HEK293 (cell line): ENCODE measurements at regions of chr12 and their contacts with region 1.

Region 1: GRCh38 chr12:30847259-30847658 is 79.3 kb upstream of the TSPAN11 start:
- H3K4me3 ChIP-seq: no peak overlapping the region
- H3K27ac ChIP-seq: no peak overlapping the region
- H3K4me1 ChIP-seq: no peaks in the 10 kb centered on the region
- CTCF ChIP-seq: peak; percentile 57

Region 2: GRCh38 chr12:30813525-30814294 is 33.5 kb before region 1 on chr12:
- CTCF ChIA-PET with region 1: no interaction called
- POLR2A ChIA-PET with region 1: no interaction called
- H3K4me3 ChIP-seq: no peak overlapping the region
- H3K27ac ChIP-seq: no peak overlapping the region
- H3K4me1 ChIP-seq: no peaks in the 10 kb centered on the region
- CTCF ChIP-seq: no peak

Region 3: DNA sequence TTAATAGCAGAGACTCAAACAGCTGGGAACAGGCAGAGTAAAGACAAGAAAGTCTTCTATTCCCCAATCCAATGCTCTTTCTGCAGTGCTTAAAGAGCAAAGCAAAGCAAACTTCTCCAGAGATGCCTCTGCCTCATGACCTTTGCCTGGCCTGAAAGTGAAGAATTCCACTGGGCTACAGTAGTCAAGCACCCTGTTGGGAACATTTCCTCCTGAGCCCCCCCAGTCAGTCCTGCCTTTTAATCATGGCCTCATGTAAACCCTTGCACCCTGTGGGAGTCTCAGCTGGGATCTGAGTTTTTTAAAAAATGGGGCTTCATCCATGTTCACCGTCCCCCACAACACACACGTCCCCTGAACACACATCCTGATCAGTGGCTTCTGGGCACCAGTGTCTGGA is 16.6 kb after region 1 on chr12:
- CTCF ChIA-PET with region 1: interaction called, 12 read pairs
- POLR2A ChIA-PET with region 1: no interaction called
- H3K4me3 ChIP-seq: no peak overlapping the region
- H3K27ac ChIP-seq: no peak overlapping the region
- H3K4me1 ChIP-seq: no peaks in the 10 kb centered on the region
- CTCF ChIP-seq: no peak

Region 4: DNA sequence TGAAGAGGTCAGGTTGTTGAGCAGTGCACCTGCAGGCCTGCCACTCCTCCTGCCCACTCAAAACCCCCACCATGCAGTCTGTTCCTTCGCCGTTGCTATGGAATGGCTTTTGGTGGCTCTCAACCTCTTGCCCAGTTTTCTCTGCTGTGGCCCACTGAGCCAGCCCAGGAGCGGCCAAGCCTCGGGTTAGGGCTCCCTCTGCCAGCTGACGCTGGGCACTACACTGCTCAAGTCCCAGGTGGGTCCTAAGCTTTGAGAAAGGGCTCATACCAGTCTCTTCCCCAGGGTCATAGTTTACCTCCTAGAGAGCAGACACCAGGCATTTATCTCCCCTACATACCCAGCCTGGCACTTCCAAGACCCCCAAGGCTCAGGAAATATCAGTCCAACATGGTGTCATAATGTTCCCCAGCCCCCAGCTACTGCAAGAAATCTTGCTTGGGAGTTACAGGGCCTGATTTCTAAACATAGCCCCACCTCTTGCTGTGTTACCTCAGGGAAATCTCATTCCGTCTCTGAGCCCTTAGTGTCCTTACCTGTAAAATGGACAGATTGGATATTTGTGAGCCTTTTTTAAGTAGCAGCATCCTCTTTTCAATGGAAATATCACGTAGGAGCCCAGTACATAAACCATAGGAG is 138.7 kb after region 1 on chr12:
- CTCF ChIA-PET with region 1: interaction called, 54 read pairs
- POLR2A ChIA-PET with region 1: interaction called, 3 read pairs
- H3K4me3 ChIP-seq: no peak overlapping the region
- H3K27ac ChIP-seq: no peak overlapping the region
- H3K4me1 ChIP-seq: no peaks in the 10 kb centered on the region
- CTCF ChIP-seq: peak; percentile 62

Region 5: GRCh38 chr12:31238764-31239387 is 391.6 kb after region 1 on chr12:
- CTCF ChIA-PET with region 1: interaction called, 39 read pairs
- POLR2A ChIA-PET with region 1: no interaction called
- H3K4me3 ChIP-seq: no peak overlapping the region
- H3K27ac ChIP-seq: no peak overlapping the region
- H3K4me1 ChIP-seq: peaks cover 6% of the 10 kb centered on the region; the same call in 1 of the 2 replicates
- CTCF ChIP-seq: peak; percentile 23; the same call in 1 of the 2 replicates

Region 6: GRCh38 chr12:31316891-31317290 is 469.6 kb after region 1 on chr12:
- CTCF ChIA-PET with region 1: no interaction called
- POLR2A ChIA-PET with region 1: no interaction called
- H3K4me3 ChIP-seq: no peak overlapping the region
- H3K27ac ChIP-seq: no peak overlapping the region
- H3K4me1 ChIP-seq: peaks cover 33% of the 10 kb centered on the region
- CTCF ChIP-seq: no peak